Activated CD8-positive, alpha-beta T cell treated with anti-CD3 and anti-CD28 coated beads for 36 hours (primary cell): ENCODE measurements at regions of chr18 and their contacts with region 1.

Region 1: GRCh38 chr18:9516437-9517064 is 41.2 kb downstream of the RALBP1 start:
- DNase-seq: peak; percentile 8
- ATAC-seq: peak; percentile 68
- H3K4me3 Mint-ChIP-seq: no peak overlapping the region
- H3K27ac Mint-ChIP-seq: no peak overlapping the region
- H3K4me1 Mint-ChIP-seq: peaks cover 5% of the 10 kb centered on the region
- H3K27me3 Mint-ChIP-seq: no peaks in the 10 kb centered on the region
- CTCF ChIP-seq: peak; percentile 87

Region 2: GRCh38 chr18:9066817-9067306 is 449.7 kb before region 1 on chr18:
- CTCF ChIA-PET with region 1: interaction called, 4 read pairs
- POLR2A ChIA-PET with region 1: no interaction called
- intact Hi-C with region 1: loop called (anchors 5 kb)
- DNase-seq: no peak
- ATAC-seq: peak; percentile 87
- H3K4me3 Mint-ChIP-seq: no peak overlapping the region
- H3K27ac Mint-ChIP-seq: peak overlapping the region; percentile 67
- H3K4me1 Mint-ChIP-seq: peaks cover 23% of the 10 kb centered on the region
- H3K27me3 Mint-ChIP-seq: no peaks in the 10 kb centered on the region
- CTCF ChIP-seq: no peak

Region 3: GRCh38 chr18:9334329-9334972 is 182.1 kb before region 1 on chr18 and contains the start of gene TWSG1:
- CTCF ChIA-PET with region 1: interaction called, 12 read pairs
- POLR2A ChIA-PET with region 1: no interaction called
- intact Hi-C with region 1: loop called (anchors 10 kb)
- DNase-seq: peak; percentile 95
- ATAC-seq: peak; percentile 88
- H3K4me3 Mint-ChIP-seq: peak within 1 kb of the TSS; percentile 78
- H3K27ac Mint-ChIP-seq: peak within 1 kb of the TSS; percentile 31
- H3K4me1 Mint-ChIP-seq: peaks cover 22% of the 10 kb centered on the region
- H3K27me3 Mint-ChIP-seq: no peaks in the 10 kb centered on the region
- CTCF ChIP-seq: peak; percentile 26
- total RNA-seq, gene TWSG1: 13.3 to 14.9 TPM

Region 4: GRCh38 chr18:9400197-9400596 is 116.4 kb before region 1 on chr18:
- CTCF ChIA-PET with region 1: no interaction called
- POLR2A ChIA-PET with region 1: no interaction called
- intact Hi-C with region 1: no loop called
- DNase-seq: no peak
- ATAC-seq: no peak
- H3K4me3 Mint-ChIP-seq: no peak overlapping the region
- H3K27ac Mint-ChIP-seq: no peak overlapping the region
- H3K4me1 Mint-ChIP-seq: peaks cover 14% of the 10 kb centered on the region
- H3K27me3 Mint-ChIP-seq: peaks cover 2% of the 10 kb centered on the region
- CTCF ChIP-seq: no peak

Region 5: DNA sequence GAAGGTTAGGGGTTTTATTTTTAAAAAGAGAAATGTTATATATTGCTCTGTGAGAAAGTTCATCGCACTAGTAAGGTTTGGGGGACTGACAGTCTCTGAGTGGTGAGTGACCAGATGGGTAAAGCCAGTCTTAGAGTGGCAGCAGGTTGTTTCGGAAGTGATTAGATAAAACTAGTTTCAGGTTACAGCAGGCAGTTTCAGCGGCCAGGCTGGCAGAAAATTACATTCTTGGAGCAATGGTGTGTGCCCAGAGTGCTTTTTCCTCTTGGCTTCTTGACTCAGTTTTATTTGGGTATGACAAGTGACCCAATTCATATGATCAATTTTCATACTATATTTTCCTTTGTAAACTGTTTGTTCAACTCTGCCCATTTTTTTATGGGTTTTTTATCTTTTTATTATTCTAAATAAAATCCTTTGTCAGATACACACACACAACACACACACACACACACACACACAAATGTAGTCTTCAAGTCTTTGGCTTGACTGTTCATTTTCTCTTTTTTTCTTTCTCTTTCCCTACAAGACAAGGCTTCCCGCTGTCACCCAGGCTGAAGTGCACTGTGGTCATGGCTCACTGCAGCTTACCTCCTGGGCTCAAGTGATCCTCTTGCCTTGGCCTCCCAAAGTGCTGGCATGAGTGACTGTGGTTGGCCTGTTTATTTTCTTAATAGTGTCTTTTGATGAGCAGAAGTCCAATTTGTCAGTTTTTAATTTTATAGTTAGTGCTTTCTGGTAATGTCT is 10.3 kb before region 1 on chr18:
- CTCF ChIA-PET with region 1: interaction called, 29 read pairs
- POLR2A ChIA-PET with region 1: no interaction called
- intact Hi-C with region 1: no loop called
- DNase-seq: no peak
- ATAC-seq: no peak
- H3K4me3 Mint-ChIP-seq: no peak overlapping the region
- H3K27ac Mint-ChIP-seq: peak overlapping the region; percentile 33
- H3K4me1 Mint-ChIP-seq: peaks cover 19% of the 10 kb centered on the region
- H3K27me3 Mint-ChIP-seq: no peaks in the 10 kb centered on the region
- CTCF ChIP-seq: no peak

Region 6: DNA sequence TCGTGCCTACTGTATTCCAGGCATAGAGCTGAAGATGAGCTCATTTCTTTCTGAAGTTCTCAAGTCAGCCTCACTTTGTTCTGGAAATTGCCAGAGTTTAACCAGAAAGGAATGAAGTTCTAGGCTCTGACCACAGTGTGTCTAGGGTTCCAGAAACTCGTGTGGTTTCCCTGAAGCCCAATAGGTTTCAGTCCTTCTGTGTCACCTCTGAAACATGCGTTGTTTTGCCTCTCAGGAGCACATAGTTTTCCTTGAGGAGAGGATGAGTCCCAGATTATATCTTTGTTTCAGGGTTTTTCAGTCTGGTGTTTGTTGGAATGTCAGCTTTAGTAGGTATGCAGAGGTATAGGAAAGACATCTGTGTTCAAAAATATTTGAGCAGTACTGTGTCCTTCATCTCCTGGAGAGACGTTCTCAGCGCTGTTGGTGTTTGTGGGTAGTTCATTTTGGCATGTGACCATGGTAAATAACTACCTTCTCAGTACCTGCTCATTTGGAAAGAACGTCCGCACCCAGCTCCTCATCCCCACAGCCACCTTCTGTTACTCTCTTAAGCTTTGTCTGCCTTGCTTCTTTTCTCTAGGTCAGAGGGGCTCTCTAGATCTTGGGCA is 15.3 kb after region 1 on chr18:
- CTCF ChIA-PET with region 1: interaction called, 16 read pairs
- POLR2A ChIA-PET with region 1: no interaction called
- intact Hi-C with region 1: no loop called
- DNase-seq: no peak
- ATAC-seq: no peak
- H3K4me3 Mint-ChIP-seq: no peak overlapping the region
- H3K27ac Mint-ChIP-seq: no peak overlapping the region
- H3K4me1 Mint-ChIP-seq: peaks cover 2% of the 10 kb centered on the region
- H3K27me3 Mint-ChIP-seq: no peaks in the 10 kb centered on the region
- CTCF ChIP-seq: no peak

Region 7: DNA sequence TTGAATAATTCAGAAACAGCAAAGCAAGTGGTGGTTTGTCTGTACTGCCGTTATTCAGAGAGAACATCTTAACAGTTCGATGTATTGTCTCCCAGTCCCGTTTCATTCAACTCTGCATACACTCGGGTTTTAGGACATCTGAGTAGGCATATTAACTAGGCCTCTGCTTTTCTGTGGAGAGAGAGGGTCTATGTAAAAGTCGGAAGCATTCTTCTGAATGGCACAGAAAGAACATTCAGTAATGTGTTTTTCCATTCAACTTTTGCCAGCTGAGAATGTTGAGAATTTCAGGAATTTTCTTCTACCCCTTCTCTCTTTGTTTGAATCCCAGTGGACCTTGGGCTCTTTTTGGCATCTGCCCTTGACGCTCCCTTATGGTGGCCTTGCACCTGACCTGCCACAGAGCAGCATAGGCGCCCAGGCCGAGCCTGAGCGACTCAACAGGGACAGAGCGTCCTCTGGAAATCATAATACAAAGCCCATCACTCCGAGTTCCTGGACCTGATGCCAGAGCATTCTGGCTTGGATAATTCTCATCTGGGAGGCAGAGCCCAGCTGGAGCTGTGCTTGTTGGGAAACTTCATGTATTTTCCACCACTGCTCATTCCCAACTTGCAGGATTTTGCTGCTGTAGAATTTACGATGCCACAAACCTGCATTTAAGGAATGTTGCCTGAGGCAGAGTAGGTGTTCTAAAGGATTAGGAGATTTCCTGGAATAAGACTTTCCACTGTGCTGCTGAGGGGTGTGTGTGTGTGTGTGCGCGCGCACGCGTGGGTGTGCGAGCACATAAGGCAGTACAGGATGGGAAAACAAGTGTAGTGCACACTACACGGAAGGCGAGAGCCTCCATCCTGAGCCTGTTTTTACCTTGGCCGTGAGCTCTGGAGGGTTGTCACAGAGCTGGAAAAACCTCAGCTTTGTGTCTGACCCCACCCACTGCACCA is 292.0 kb after region 1 on chr18:
- CTCF ChIA-PET with region 1: no interaction called
- POLR2A ChIA-PET with region 1: no interaction called
- intact Hi-C with region 1: no loop called
- DNase-seq: no peak
- ATAC-seq: no peak
- H3K4me3 Mint-ChIP-seq: no peak overlapping the region
- H3K27ac Mint-ChIP-seq: no peak overlapping the region
- H3K4me1 Mint-ChIP-seq: no peaks in the 10 kb centered on the region
- H3K27me3 Mint-ChIP-seq: no peaks in the 10 kb centered on the region
- CTCF ChIP-seq: no peak